Aorta (tissue), 5 donors: ENCODE measurements at regions of chr19 and their contacts with region 1.

Region 1: GRCh38 chr19:4870025-4870700 is 2.7 kb upstream of the PLIN3 start:
- DNase-seq: peak; percentile 77 to 87
- ATAC-seq: no peak
- H3K4me3 ChIP-seq: no peak overlapping the region
- H3K27ac ChIP-seq: no peak overlapping the region
- H3K4me1 ChIP-seq: no peaks in the 10 kb centered on the region
- H3K27me3 ChIP-seq: no peaks in the 10 kb centered on the region

Region 2: DNA sequence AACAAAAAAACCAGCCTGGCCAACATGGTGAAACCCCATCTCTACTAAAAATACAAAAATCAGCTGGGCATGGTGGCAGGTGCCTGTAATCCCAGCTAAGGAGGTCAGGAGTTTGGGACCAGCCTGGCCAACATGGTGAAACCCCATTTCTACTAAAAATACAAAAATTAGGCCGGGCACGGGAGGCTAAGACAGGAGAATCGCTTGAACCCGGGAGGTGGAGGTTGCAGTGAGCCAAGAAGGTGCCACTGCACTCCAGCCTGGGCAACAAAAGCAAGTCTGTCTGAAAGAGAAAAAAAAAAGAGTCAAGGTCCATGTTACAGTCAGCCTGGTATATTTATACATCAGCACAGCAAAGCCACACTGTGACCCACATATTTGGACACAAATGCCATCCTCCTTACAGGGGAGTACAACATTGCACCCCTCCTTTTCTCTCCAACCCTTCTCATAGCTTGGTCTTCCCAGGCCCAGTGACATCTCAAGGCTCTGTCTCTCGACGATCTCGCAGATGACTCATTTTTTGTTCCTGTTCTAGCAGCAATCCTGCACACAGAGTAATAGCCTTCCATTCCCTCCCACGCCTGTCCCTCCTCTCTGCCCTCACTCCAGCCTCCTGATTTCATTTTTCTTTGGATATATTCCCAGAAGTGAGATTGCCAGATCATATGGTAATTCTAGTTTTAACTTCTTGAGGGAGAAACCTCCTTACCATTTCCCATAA is 125.5 kb before region 1 on chr19:
- intact Hi-C with region 1: no loop called
- DNase-seq: peak in 1 of 2 donors; percentile 69
- ATAC-seq: peak; percentile 85
- H3K4me3 ChIP-seq: no peak overlapping the region
- H3K27ac ChIP-seq: peak overlapping the region in 1 of 2 donors; percentile 12
- H3K4me1 ChIP-seq: no peaks in the 10 kb centered on the region
- H3K27me3 ChIP-seq: no peaks in the 10 kb centered on the region

Region 3: DNA sequence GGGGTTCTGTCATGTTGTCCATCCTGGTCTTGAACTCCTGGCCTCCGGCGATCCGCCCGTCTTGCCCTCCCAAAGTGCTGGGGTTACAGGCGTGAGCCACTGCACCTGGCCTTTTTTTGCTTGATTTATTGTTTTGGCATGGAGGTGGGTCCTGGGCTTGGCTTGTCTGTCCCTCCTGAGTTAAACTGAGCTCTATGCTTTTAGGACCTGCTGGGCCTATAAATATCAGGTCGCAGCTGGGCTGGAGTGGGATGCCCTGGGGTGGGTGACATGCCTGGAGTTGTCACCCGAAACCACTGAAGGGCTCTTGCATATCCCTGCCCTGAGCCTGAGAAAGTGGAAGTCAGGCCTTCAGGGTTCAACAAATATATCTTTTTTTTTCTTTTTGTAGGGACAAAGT is 27.0 kb after region 1 on chr19:
- intact Hi-C with region 1: no loop called
- DNase-seq: no peak
- ATAC-seq: no peak
- H3K4me3 ChIP-seq: no peak overlapping the region
- H3K27ac ChIP-seq: no peak overlapping the region
- H3K4me1 ChIP-seq: no peaks in the 10 kb centered on the region
- H3K27me3 ChIP-seq: no peaks in the 10 kb centered on the region

Region 4: DNA sequence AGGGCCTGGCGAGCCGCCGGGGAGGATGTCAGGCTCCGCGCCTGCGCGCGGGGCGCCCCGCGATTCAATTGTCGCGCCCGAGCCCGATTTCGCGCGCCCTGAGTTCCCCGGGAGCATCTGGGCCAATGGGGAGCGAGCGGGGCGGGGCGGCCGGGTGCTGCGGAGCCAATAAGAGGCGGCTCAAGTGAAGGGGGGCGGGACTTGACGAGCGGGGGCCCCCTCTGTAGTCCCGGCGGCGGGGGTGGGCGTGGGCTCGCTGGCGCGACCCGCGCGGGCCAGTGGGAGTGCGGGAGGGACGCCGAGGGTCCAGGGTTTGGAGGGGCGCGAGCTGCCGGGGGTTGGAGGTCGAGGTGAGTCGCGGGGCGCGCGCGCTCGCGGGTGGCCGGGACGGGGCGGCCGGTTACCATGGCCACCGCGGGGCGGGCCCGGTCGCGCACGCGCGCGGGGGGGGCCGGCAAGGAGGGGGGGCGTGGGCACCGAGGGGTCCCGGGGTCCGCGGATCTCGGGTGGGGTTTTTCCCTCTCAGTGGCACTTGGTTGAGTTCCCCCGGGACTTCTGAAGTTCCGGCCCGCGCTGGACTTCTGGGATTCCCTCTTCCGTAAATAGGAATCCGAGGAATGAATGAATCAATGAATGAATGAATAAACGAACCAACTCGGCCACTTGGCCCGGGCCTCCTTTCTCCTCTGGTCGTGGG is 39.9 kb after region 1 on chr19:
- intact Hi-C with region 1: loop called (anchors 2 kb)
- DNase-seq: peak; percentile 95 to 97
- ATAC-seq: peak; percentile 91
- H3K4me3 ChIP-seq: peak overlapping the region; percentile 68 to 79
- H3K27ac ChIP-seq: no peak overlapping the region
- H3K4me1 ChIP-seq: no peaks in the 10 kb centered on the region
- H3K27me3 ChIP-seq: no peaks in the 10 kb centered on the region

Region 5: DNA sequence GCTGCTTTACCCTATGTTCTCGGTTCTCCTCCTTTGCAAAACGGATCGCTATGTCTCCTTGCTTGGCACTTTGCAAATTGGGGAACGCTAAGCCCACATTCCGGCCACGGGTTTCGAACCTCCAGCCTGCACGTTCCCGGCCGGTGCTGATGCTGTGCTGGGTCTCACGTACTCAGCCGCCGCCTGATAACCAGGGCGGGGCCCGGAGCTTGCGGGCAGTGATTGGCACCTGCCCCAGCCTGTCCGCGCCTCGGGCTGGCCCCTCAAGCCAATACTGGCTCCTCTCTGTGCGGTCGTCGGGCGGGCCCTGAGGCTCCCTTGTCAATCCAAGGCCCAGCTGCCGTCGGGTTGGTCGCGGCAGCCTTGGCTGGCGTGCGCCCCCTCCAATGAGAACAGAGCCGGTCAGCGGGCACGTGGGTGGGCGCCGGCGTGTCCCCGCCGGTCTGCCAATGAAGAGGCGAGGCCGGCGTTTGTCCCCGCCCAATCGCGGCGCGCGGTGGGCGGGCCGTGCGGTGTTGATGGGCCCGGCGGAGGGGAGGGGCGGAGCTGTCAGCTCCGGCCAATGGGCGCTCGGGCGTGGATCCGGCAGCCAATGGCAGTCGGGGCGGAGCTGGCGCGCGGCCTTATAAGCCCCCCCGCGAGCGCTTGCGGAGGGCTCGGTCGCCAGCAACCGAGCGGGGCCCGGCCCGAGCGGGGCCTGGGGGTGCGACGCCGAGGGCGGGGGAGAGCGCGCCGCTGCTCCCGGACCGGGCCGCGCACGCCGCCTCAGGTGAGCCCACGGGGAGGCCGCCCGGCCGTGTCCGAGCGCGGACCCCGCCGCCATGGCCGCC is 98.5 kb after region 1 on chr19 and contains the start of gene KDM4B:
- intact Hi-C with region 1: loop called in 1 of 2 experiments (anchors 2 kb)
- DNase-seq: peak; percentile 99 to 100
- ATAC-seq: peak; percentile 99
- H3K4me3 ChIP-seq: peak within 1 kb of the TSS; percentile 76 to 78
- H3K27ac ChIP-seq: no peak within 1 kb of the TSS
- H3K4me1 ChIP-seq: no peaks in the 10 kb centered on the region
- H3K27me3 ChIP-seq: no peaks in the 10 kb centered on the region
- total RNA-seq, gene KDM4B: 37.5 to 58.1 TPM